HEK293T (cell line): ENCODE measurements at regions of chr4 and their contacts with region 1.

Region 1: DNA sequence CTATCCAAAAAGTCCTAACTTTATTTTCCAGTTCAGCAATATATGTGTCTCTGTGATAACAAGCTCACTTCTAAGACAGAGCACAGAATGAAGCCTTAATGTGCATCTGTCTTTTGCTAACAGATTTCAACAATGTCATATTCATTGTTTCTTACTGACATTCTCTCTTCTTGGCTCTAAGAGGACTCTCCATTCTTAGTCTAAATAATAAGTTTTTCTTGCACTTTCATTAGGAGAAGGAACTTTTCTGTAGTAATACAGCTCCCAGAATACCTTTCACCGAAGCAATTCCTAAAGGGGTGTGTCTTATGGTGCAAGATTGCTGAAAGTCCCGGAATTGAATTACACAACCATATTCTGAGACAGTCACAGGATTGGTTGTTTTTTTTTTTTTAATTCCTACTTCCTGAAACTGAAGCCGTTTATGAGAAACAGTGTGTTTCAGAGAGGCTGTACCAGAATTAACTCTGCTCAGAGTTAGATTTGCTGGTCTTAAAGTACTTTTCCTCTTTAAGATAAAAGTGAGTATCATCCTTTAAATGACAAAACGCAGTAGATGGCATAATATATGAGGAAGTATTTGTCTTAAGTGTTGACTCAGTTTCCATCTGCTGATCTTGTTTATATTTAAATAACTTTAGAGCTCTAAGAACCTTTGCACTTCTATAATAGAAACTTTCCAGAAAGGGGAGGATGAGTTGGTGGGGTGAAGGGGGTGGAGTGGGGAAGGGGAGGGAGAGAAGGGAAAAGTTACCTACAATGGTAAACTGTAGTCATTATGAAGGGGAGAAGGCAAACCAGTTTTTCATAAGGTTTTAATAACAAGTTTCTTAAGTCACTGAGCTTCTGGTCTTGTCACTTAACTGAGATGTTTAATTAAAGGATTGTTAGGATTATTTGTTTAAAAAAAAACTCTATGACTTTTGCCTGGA is at the start of gene ALPK1:
- DNase-seq: peak; percentile 71

Region 2: DNA sequence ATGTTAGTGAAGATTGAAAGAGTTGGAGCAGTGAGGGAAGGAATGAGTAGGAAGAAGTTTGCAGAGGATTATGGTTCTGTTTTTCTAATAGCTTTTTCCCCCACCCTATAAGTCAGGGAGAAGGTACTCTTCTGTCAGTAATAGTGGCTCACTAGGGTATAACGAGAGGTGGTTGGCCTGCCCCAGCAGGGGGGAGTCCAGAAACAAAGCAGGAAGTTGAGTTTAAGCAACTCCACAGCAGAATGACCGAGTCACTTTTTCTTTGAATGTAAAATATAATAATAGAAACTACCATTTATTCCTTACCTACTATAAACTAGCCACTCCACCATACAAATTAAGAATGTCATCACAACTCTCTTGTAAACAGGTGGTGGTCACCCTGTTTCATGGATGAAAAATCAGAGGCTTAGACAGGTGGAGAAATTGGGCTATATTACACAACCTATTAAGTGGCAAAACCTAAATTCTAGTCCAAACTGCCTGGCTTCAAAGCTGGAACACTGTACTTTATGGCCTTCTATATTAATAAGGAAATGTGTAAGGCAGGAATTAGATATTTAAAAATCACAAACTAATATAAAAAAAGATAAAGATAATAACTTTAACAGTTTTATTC is 43.7 kb before region 1 on chr4:
- CTCF ChIA-PET with region 1: no interaction called
- POLR2A ChIA-PET with region 1: no interaction called
- DNase-seq: no peak

Region 3: DNA sequence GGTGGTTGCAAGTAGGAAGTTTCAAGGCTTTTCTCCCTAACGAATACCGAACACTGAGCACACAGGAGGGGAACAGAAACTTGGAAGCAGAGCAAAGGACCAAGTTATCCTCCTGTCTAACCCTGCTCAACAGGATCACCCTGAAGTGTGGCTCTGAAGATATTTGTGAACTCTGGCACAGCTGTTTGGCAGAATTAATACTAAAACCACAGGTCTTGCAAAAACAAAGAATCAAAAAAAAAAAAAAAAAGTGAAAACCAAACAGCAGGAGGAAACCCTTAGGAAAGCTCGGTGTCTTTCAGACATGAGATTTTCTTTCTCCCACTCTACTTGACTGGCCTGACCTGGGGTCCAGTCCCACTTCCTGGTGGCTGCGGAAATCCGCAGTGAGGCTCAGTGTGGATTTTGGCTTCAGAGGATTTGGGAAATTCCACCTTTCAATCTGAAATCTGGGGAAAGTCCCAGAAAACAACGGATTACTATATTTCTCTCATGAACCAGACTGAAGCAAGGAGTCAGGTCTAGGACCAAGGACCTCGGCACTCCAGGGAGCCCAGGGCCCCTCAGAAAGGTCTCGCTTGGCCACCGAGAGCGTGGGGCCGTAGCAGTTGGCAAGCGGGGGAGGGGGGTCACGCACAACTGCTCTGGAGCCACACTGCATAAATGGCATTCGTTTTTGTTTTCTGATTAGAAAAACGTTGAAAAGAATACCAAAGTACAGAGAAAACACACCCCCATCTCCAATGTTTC is 12.4 kb before region 1 on chr4:
- CTCF ChIA-PET with region 1: no interaction called
- POLR2A ChIA-PET with region 1: interaction called, 12 read pairs
- DNase-seq: no peak